Right ventricle myocardium inferior (tissue), 1 donor: ENCODE measurements at regions of chr19 and their contacts with region 1.

Region 1: DNA sequence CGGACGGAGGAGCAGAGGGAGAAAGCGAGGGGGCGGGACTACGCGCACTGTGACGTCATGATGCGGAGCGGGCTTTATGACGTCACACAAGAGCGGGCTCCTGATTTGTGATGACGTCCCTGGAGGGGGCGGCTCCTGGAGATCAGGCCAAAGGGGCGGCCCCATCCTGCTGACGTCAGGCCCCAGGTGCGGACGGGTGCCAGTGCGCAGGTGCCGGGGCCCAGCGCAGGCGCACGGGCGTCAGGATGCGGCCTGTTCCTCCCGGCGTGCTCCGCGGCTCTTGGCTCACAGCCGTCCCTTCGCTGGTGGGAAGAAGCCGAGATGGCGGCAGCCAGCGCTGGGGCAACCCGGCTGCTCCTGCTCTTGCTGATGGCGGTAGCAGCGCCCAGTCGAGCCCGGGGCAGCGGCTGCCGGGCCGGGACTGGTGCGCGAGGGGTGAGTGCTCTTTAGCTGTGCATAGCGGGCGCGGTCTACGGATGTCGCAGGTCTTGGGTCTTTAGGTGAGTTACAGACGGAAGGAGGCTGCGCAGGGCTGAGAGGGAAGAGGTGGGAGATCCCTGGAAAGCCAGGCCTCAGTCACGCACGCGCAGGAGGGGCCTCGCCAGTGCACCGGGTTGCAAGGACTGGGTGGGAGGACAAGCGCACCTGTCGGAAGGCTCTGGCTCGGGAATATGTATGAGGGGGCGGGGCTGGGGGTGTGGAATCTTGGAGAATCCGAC is at the starts of genes EMC10 and GARIN5A:
- DNase-seq: peak; percentile 93
- ATAC-seq: peak; percentile 93
- total RNA-seq, gene EMC10: 78.0 TPM
- total RNA-seq, gene GARIN5A: 2.2 TPM

Region 2: GRCh38 chr19:50511068-50511822 is 34.9 kb after region 1 on chr19 and contains the start of gene JOSD2:
- intact Hi-C with region 1: loop called (anchors 1 kb)
- DNase-seq: peak; percentile 100
- ATAC-seq: peak; percentile 97
- total RNA-seq, gene JOSD2: 43.7 TPM

Region 3: DNA sequence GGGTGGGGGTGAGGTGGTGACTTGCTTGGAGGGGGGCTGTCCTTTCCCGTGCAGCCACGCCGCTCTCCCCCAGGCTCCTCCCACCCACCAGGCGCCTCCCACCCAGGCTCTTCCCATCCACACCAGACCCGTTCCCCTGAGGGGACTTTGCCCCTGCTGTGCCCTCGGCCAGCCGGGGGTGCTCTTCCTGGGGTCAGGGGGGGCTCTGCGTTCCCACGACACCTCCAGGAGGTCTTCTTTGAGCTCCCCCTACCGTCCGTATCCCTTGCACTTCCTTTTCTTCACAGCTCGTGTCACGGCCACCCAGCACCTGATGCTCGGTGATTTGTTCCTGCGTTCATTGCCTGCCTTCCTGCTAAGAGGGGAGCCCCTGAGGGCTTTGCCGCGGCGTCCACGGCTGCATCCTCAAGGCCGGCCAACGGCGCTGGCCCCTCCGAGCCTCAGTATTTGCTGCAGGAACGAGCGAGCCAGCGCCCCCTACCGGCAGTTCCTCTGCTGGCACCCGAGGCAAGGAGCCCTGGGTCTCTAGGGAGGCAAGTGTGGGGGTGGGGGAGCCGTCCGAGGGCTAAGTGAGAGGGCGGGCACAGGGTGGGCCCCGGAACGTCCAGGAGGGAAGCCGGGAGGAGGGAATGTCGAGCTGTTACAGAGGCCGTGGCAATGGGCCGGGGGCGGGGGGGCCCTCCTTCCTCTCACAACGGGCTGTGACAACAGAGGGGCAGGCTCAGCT is 80.1 kb after region 1 on chr19:
- intact Hi-C with region 1: loop called (anchors 10 kb)
- DNase-seq: peak; percentile 84
- ATAC-seq: peak; percentile 70